ENCODE measurements at regions of chr1 and their contacts with region 1.

Region 1: GRCh38 chr1:235739124-235739523 is 89.5 kb upstream of the GNG4 start:
- DNase-seq: peak; percentile 74
- H3K4me3 ChIP-seq: no peak overlapping the region
- H3K27ac ChIP-seq: no peak overlapping the region
- H3K4me1 ChIP-seq: peaks cover 14% of the 10 kb centered on the region
- H3K27me3 ChIP-seq: no peaks in the 10 kb centered on the region
- CTCF ChIP-seq: no peak
- POLR2A ChIP-seq: no peak

Region 2: DNA sequence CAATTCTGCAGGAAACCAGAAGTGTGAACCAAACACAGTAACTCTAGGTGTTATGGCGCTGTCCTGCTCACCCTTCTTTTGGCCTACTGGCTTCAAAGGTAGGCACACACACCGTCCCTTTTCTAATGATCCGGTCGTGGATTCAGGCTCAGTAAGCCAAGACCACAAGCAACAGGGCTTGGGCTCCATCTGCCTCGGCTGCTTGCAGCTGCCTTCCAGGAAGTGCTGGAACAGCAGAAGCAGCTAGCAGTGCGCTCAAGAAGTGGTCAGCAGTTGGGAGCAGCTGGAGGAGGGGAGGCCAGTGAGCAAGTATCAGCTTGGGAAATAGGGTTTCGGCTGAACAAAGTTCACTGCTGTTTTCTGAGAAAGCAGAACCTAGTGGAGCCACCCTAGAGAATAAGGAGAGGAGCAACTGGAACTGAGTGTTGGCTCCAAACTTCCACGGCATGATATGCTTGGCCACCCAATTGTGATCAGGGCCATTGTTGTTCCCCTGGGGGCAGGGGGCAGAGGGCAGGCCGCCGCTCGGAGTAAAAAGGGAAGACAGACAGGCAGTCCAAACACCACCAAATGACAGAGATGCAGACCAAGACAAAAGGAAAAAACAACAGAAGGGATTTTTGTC is 783.9 kb before region 1 on chr1:
- CTCF ChIA-PET with region 1: no interaction called
- POLR2A ChIA-PET with region 1: no interaction called
- dilution Hi-C with region 1: no loop called
- intact Hi-C with region 1: loop called (anchors 10 kb)
- DNase-seq: peak; percentile 16
- H3K4me3 ChIP-seq: no peak overlapping the region
- H3K27ac ChIP-seq: no peak overlapping the region
- H3K4me1 ChIP-seq: peaks cover 8% of the 10 kb centered on the region
- H3K27me3 ChIP-seq: no peaks in the 10 kb centered on the region
- CTCF ChIP-seq: no peak
- POLR2A ChIP-seq: no peak

Region 3: DNA sequence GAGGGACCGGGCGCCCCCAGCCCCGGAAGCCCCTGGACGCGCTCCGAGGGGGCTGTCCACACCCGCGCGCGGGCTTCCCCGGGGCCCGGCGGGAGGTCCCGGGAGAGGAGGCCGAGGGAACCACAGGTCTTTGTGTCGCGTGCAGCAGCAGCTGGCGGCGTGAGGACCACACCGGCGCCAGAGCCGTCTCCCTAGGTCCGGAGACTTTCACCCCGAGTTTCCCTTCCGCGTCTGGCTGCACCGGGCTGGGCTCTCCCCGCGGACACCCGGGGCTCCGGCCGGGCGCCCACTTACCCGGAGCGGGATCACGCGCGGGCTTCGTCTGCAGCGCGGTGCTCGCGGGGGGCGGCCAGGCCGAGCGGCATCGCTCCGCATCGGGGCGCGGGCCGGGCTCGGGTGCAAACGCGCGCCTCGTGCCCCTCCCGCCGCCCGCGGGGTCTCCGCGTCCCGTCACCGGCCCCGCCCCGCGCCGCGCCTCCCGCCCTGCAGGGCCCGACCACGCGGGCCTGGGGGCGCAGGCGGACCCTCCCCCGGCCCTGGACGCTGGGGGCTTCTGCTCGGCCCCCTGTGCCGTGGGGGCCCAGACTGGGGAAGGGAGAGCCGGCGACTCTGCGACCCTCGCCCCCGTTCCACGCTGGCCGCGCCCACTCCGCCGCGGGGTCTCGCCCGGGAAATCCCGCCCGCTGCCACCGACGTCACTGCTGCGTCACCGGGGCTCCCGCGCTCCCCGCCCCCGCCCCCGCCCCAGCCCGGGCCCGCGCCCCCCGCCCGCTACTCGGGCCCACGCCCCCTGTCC is 89.6 kb before region 1 on chr1 and contains the start of gene GNG4:
- CTCF ChIA-PET with region 1: no interaction called
- POLR2A ChIA-PET with region 1: no interaction called
- dilution Hi-C with region 1: no loop called
- intact Hi-C with region 1: loop called (anchors 5 kb)
- DNase-seq: no peak
- H3K4me3 ChIP-seq: peak within 1 kb of the TSS in 2 of 3 experiments; percentile 23 to 43
- H3K27ac ChIP-seq: no peak within 1 kb of the TSS
- H3K4me1 ChIP-seq: peaks cover 11% of the 10 kb centered on the region
- H3K27me3 ChIP-seq: peaks cover 27 to 49% of the 10 kb centered on the region in 2 experiments
- CTCF ChIP-seq: no peak
- POLR2A ChIP-seq: no peak
- total RNA-seq, gene GNG4: not detected in 2 replicates

Region 4: GRCh38 chr1:236292425-236292824 is 553.3 kb after region 1 on chr1:
- CTCF ChIA-PET with region 1: no interaction called
- POLR2A ChIA-PET with region 1: no interaction called
- dilution Hi-C with region 1: no loop called
- intact Hi-C with region 1: no loop called
- DNase-seq: no peak
- H3K4me3 ChIP-seq: no peak overlapping the region
- H3K27ac ChIP-seq: no peak overlapping the region
- H3K4me1 ChIP-seq: no peaks in the 10 kb centered on the region
- H3K27me3 ChIP-seq: peaks cover 1 to 3% of the 10 kb centered on the region in 2 experiments
- CTCF ChIP-seq: no peak
- POLR2A ChIP-seq: no peak

Measured in endothelial cell of umbilical vein (primary cell).